ENCODE measurements at regions of chr1 and their contacts with region 1.

Region 1: GRCh38 chr1:202348509-202349205 is at the start of gene PPP1R12B:
- DNase-seq: peak; percentile 98
- H3K4me3 Mint-ChIP-seq: peak within 1 kb of the TSS; percentile 86
- H3K27ac Mint-ChIP-seq: peak within 1 kb of the TSS; percentile 81
- H3K4me1 Mint-ChIP-seq: peaks cover 24% of the 10 kb centered on the region
- H3K27me3 Mint-ChIP-seq: no peaks in the 10 kb centered on the region
- total RNA-seq, gene PPP1R12B: 11.0 to 12.4 TPM

Region 2: DNA sequence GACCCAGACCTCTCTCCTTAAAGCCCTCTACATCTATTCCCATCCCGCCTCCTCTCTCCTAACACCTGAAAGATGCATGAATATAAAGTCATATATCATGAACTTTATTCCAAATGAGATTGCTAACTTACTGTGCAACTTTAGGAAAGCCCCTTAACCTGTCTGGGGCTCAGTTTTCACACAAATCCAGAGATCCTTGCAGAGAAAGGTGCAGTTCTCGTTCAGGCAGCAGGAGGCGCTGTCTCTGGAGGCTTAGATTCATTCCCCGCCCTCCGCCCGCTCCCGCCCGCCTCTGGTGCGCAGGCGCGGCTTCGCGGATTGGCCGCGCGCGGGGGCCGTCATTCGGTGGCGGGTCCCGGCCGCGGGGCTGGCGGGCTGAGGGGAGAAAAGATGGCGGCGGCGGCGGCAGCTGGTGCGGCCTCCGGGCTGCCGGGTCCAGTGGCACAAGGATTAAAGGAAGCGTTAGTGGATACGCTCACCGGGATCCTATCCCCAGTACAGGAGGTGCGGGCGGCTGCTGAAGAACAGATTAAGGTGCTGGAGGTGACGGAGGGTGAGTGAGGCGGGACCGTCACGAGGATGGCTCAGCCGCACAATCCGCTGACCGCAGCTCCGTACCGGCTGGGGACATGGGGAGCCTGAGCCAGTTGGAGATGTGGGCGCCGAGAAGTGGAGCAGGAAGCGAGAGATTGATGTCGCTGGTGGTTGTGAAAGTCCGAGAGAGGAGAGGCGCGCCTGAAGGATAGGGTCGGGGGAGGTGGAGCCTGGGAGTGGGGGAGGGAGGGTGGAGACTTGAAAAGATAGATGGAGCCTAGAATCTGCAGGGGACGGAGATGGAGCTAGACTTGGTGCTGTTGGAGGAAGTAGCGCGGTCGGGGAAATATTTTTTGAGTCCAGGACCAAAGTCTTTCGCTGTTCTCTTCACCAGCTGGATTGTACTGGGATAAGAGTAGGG is 519.6 kb before region 1 on chr1 and contains the start of gene IPO9:
- CTCF ChIA-PET with region 1: no interaction called
- intact Hi-C with region 1: loop called (anchors 5 kb)
- DNase-seq: peak; percentile 98
- H3K4me3 Mint-ChIP-seq: peak within 1 kb of the TSS; percentile 99
- H3K27ac Mint-ChIP-seq: peak within 1 kb of the TSS; percentile 93
- H3K4me1 Mint-ChIP-seq: peaks cover 45% of the 10 kb centered on the region
- H3K27me3 Mint-ChIP-seq: no peaks in the 10 kb centered on the region
- total RNA-seq, gene IPO9: 63.9 to 65.7 TPM

Region 3: GRCh38 chr1:202247894-202248681 is 100.6 kb before region 1 on chr1:
- CTCF ChIA-PET with region 1: no interaction called
- intact Hi-C with region 1: no loop called
- DNase-seq: no peak
- H3K4me3 Mint-ChIP-seq: no peak overlapping the region
- H3K27ac Mint-ChIP-seq: no peak overlapping the region
- H3K4me1 Mint-ChIP-seq: no peaks in the 10 kb centered on the region
- H3K27me3 Mint-ChIP-seq: no peaks in the 10 kb centered on the region

Region 4: DNA sequence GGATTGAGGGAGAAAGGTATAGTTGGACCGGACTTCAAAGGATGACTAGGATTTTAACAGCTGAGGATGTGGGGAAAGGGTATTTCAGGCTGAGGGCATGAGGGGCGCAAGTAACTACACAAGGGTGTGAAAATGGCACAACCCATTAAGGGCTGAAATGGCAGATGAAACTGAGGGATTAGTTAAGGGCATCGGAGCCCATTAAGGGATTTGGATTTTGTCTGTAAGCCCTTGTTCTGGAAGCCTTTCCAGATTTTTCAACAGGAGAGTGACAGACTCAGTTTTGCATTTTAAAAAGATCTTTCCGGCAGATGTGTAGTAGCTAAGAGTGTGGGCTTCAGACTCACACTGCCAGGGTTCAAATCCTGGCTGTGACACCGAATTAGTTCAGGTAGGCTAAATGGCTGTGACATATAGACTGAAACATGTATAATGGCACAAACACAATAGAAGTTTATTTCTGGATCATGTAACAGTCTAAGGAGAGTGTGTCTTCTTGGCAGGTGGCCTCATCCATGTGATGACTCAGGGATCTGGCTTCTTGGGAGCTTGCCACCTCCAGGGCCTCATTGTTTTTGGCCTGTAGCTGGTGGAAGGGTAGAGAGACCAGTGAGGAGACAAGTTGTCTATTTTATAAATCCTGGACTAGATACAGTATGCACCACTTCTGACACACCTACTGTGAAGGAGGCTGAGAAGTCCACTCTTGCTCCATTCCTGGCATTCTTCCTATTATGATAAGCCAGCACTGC is 56.5 kb before region 1 on chr1:
- CTCF ChIA-PET with region 1: no interaction called
- intact Hi-C with region 1: loop called (anchors 1 kb)
- DNase-seq: no peak
- H3K4me3 Mint-ChIP-seq: no peak overlapping the region
- H3K27ac Mint-ChIP-seq: no peak overlapping the region
- H3K4me1 Mint-ChIP-seq: peaks cover 18% of the 10 kb centered on the region
- H3K27me3 Mint-ChIP-seq: no peaks in the 10 kb centered on the region

Region 5: GRCh38 chr1:202306535-202307345 is 41.9 kb before region 1 on chr1:
- CTCF ChIA-PET with region 1: no interaction called
- intact Hi-C with region 1: no loop called
- DNase-seq: no peak
- H3K4me3 Mint-ChIP-seq: no peak overlapping the region
- H3K27ac Mint-ChIP-seq: no peak overlapping the region
- H3K4me1 Mint-ChIP-seq: no peaks in the 10 kb centered on the region
- H3K27me3 Mint-ChIP-seq: peaks cover 2% of the 10 kb centered on the region

Region 6: GRCh38 chr1:202571347-202572339 is 223.0 kb after region 1 on chr1:
- CTCF ChIA-PET with region 1: interaction called, 4 read pairs
- intact Hi-C with region 1: loop called (anchors 1 kb)
- DNase-seq: peak; percentile 56
- H3K4me3 Mint-ChIP-seq: no peak overlapping the region
- H3K27ac Mint-ChIP-seq: no peak overlapping the region
- H3K4me1 Mint-ChIP-seq: peaks cover 3% of the 10 kb centered on the region
- H3K27me3 Mint-ChIP-seq: no peaks in the 10 kb centered on the region

Region 7: GRCh38 chr1:202713110-202713509 is 364.5 kb after region 1 on chr1:
- CTCF ChIA-PET with region 1: interaction called, 11 read pairs
- intact Hi-C with region 1: no loop called
- DNase-seq: no peak
- H3K4me3 Mint-ChIP-seq: no peak overlapping the region
- H3K27ac Mint-ChIP-seq: no peak overlapping the region
- H3K4me1 Mint-ChIP-seq: peaks cover 4% of the 10 kb centered on the region
- H3K27me3 Mint-ChIP-seq: peaks cover 29% of the 10 kb centered on the region

Region 8: GRCh38 chr1:202926720-202927491 is 578.2 kb after region 1 on chr1 and contains the start of gene KLHL12:
- CTCF ChIA-PET with region 1: no interaction called
- intact Hi-C with region 1: loop called (anchors 1 kb)
- DNase-seq: peak; percentile 96
- H3K4me3 Mint-ChIP-seq: peak within 1 kb of the TSS; percentile 95
- H3K27ac Mint-ChIP-seq: peak within 1 kb of the TSS; percentile 89
- H3K4me1 Mint-ChIP-seq: peaks cover 24% of the 10 kb centered on the region
- H3K27me3 Mint-ChIP-seq: no peaks in the 10 kb centered on the region
- total RNA-seq, gene KLHL12: 42.5 to 42.6 TPM

Region 9: GRCh38 chr1:202998836-202999750 is 650.4 kb after region 1 on chr1:
- CTCF ChIA-PET with region 1: no interaction called
- intact Hi-C with region 1: loop called (anchors 1 kb)
- DNase-seq: peak; percentile 83
- H3K4me3 Mint-ChIP-seq: peak overlapping the region; percentile 22
- H3K27ac Mint-ChIP-seq: no peak overlapping the region
- H3K4me1 Mint-ChIP-seq: peaks cover 4% of the 10 kb centered on the region
- H3K27me3 Mint-ChIP-seq: peaks cover 26% of the 10 kb centered on the region

Measured in activated naive CD4-positive, alpha-beta T cell treated with anti-CD3 and anti-CD28 coated beads for 36 hours (primary cell).